ENCODE measurements at regions of chr4 and their contacts with region 1.

Region 1: DNA sequence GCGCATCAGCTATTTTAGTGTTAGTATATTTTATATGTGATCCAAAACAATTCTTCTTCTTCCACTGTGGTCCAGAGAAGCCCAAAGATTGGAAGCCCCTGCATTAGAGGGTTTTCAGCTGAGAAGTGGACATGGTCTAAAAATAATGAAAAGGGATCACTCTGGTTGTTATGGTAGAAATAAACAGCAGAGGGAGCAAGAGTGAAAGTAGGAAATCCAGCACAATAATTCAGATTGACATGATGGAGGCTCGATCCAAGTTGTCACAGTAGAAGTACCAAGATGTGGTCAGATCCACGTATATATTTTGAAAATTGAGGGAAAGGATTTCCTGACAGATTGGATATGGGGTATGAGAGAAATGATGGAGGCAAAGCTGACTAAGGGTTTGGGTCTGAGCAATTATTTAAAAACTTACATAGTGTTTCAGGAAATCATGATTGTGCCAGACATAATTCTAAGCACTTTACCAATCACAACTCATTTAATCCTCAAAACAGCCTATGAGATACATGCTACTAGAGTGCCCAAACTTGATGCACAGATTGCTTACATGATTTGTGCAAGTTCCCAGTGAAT is 17.0 kb upstream of the TMEM144 start:
- DNase-seq: no peak

Region 2: GRCh38 chr4:157616741-157617472 is 576.4 kb before region 1 on chr4:
- intact Hi-C with region 1: no loop called
- DNase-seq: peak in 1 of 10 donors; percentile 0

Region 3: DNA sequence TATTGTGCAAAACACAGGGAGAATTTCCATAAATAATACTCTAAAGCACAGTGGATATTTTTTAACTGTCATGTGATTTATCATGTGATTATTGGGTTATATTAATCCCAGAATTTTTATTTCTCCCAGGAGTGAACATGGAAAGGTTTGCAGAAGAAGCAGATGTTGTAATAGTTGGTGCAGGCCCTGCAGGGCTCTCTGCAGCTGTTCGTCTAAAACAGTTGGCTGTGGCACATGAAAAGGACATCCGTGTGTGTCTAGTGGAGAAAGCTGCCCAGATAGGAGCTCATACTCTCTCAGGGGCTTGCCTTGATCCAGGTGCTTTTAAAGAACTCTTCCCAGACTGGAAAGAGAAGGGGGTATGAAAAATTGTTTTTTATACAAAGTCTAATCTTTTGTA is 488.8 kb after region 1 on chr4:
- intact Hi-C with region 1: no loop called
- DNase-seq: no peak

Region 4: DNA sequence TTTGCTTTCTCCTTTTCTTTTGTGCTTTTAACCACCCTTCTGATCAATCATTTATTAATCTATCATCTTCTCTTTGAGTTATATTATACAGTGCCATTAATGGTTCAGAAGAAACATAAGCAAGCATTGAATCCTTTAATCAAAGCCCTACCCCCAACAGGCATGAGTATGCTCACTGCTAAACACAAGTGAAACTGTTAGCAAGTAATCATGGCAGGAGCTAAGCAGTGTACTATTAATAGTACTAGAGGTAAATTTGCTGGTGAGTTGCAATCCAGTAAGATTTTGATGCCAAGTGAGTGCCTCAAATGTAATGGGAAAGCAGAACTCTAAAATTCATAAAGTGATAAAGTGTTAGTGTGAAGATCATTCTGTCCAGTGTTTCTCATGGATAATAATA is 632.8 kb after region 1 on chr4:
- intact Hi-C with region 1: loop called (anchors 5 kb)
- DNase-seq: no peak